ENCODE measurements at regions of chr7 and their contacts with region 1.

Region 1: GRCh38 chr7:85554236-85555178 is 367.7 kb upstream of the SEMA3D start:
- DNase-seq: peak; percentile 4
- CTCF ChIP-seq: peak; percentile 74

Region 2: GRCh38 chr7:85041605-85042216 is 512.8 kb before region 1 on chr7:
- CTCF ChIA-PET with region 1: interaction called, 56 read pairs
- POLR2A ChIA-PET with region 1: no interaction called
- DNase-seq: peak; percentile 17
- CTCF ChIP-seq: peak; percentile 72